ENCODE measurements at regions of chr10 and their contacts with region 1.

Region 1: GRCh38 chr10:79628988-79629954 is 18.5 kb downstream of the SFTPA1 start:
- DNase-seq: no peak
- ATAC-seq: no peak
- H3K4me3 Mint-ChIP-seq: no peak overlapping the region
- H3K27ac Mint-ChIP-seq: peak overlapping the region; percentile 40
- H3K4me1 Mint-ChIP-seq: no peaks in the 10 kb centered on the region
- H3K27me3 Mint-ChIP-seq: peaks cover 17% of the 10 kb centered on the region

Region 2: DNA sequence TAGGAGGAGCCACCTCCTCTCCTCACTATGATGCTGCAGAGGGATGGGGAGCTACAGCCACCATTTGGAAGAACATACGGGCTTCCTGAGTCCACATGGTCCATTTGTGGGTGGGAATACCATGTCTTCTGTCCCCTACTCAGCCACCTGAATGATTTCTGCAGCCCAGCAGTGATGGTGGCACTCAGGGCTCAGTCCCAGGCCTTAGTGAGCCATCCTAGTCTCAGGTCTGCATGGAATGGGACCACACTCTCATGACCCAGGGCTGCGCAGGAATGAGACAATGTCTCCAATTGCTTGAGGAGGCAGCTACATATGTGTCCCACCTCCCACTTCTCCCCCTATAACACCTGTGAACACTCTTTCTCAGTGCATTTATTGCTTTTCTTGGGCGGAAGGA is 13.7 kb before region 1 on chr10:
- CTCF ChIA-PET with region 1: interaction called, 3 read pairs
- POLR2A ChIA-PET with region 1: no interaction called
- intact Hi-C with region 1: loop called in 1 of 2 experiments (anchors 2 kb)
- DNase-seq: no peak
- ATAC-seq: no peak
- H3K4me3 Mint-ChIP-seq: no peak overlapping the region
- H3K27ac Mint-ChIP-seq: no peak overlapping the region
- H3K4me1 Mint-ChIP-seq: no peaks in the 10 kb centered on the region
- H3K27me3 Mint-ChIP-seq: peaks cover 9% of the 10 kb centered on the region

Measured in activated CD4-positive, alpha-beta T cell treated with anti-CD3 and anti-CD28 coated beads for 36 hours (primary cell).